ENCODE measurements at regions of chr22 and their contacts with region 1.

Region 1: DNA sequence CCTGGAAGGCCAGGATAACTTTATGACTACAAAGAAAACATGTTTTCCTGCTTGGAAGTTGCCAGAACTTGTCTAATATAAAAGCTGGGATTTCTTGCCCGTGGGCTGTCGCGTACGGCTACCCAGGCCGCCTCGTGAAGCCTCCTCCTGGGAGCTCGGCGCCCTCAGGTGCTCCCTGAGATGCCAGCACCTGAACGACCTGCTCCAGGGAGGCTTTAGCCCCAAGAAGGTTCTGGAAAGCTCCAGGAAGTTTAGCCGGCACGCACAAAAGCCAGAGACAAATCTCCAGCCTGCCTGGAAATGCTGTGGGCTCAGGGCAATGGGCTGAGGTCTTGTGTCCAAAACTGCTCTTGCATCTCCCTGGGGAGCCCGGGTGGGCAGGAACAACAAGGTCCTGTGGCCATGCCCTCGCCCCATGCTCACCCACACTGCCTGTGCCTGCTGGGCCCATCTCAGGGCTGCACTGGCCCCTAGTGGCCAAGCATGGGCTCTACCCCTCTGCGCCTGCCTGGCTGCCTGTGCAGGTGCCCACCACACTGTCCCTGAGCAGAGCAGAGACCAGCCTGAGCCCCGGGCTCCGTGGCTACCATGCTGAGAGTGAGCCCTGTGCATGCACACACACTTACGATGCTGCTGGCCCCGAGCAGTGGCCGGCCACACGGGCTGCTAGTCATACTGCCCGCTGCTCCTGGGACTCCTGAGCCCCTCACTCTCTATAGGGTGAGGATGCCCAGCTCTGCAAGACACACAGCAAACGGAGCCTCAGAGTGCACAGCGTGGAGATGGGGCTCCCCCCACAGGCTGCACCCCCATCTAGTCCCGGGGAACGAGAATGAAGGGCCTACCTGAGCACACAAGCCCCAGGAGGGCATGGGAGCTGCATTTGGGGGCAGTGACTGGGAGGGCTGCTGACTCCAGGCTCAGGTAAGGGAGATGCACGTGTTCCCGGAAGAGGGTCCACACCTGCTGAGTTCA is 4.9 kb upstream of the CELSR1 start:
- DNase-seq: peak; percentile 91
- H3K4me3 Mint-ChIP-seq: no peak overlapping the region
- H3K27ac Mint-ChIP-seq: no peak overlapping the region
- H3K4me1 Mint-ChIP-seq: peaks cover 8% of the 10 kb centered on the region
- H3K27me3 Mint-ChIP-seq: peaks cover 35% of the 10 kb centered on the region

Region 2: DNA sequence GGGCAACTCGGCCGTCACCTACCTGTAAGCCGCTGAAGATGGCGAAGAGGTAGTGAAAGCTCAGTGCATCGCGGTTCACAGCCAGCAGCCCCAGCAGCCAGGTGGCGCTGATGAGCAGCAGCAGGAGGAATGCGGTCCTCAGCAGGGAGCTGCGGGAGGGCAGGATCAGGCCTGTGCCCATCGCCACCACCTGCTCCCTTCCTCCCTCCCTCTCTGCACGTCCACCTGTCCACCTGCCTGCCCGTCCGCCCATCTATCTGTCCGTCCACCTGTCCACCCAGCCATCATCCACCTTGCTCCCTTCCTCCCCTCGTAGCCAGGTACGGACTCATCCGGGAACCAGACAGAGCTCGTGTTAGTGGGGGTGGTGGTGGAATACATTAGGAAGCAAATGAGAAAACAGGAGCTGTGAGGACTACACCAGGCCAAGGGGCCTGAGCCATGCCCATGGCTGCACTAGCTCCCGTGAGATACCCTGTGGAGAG is 174.5 kb before region 1 on chr22:
- intact Hi-C with region 1: loop called (anchors 1 kb)
- DNase-seq: peak; percentile 91
- H3K4me3 Mint-ChIP-seq: no peak overlapping the region
- H3K27ac Mint-ChIP-seq: no peak overlapping the region
- H3K4me1 Mint-ChIP-seq: peaks cover 5% of the 10 kb centered on the region
- H3K27me3 Mint-ChIP-seq: peaks cover under 1% of the 10 kb centered on the region

Measured in activated CD4-positive, alpha-beta T cell treated with anti-CD3 and anti-CD28 coated beads, Interleukin-2, amount 10 ng/mL, durations not matched to agents 24 days and 14 days (primary cell).